HepG2 (cell line): ENCODE measurements at regions of chr18 and their contacts with region 1.

Region 1: GRCh38 chr18:41906528-41907146 is 48.4 kb upstream of the PIK3C3 start:
- DNase-seq: peak; percentile 13
- ATAC-seq: peak; percentile 38; the same call in 1 of the 3 replicates
- H3K4me3 ChIP-seq: no peak overlapping the region
- H3K27ac ChIP-seq: no peak overlapping the region
- H3K4me1 ChIP-seq: no peaks in the 10 kb centered on the region
- H3K27me3 ChIP-seq: no peaks in the 10 kb centered on the region
- CTCF ChIP-seq: peak; percentile 64
- EP300 ChIP-seq: no peak
- POLR2A ChIP-seq: no peak
- RAD21 ChIP-seq: no peak; the same call in 1 of the 2 replicates

Region 2: DNA sequence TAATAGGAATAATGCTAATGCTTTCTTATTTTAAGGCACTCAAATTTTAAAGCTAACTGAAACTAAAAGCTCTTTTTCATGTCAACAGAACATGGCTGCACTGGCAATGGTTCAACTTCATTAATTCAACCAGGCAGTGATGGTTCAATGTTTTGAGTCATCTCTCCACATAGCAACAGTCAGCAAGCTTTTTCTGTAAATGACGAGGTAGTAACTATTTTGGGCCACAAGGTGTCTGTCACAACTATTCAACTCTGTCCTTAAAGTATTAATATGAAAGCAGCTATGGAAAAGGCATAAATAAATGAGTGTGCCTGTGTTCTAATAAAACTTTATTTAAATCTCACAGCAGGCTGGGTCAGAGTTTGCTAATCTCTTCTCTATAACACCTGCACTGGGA is 1377.2 kb before region 1 on chr18:
- CTCF ChIA-PET with region 1: no interaction called
- POLR2A ChIA-PET with region 1: no interaction called
- in situ Hi-C with region 1: no loop called
- intact Hi-C with region 1: loop called (anchors 10 kb)
- DNase-seq: peak; percentile 1
- ATAC-seq: peak; percentile 46; the same call in 1 of the 3 replicates
- H3K4me3 ChIP-seq: no peak overlapping the region
- H3K27ac ChIP-seq: no peak overlapping the region
- H3K4me1 ChIP-seq: no peaks in the 10 kb centered on the region
- H3K27me3 ChIP-seq: no peaks in the 10 kb centered on the region
- CTCF ChIP-seq: no peak
- EP300 ChIP-seq: no peak
- POLR2A ChIP-seq: no peak
- RAD21 ChIP-seq: no peak

Region 3: GRCh38 chr18:40935423-40935822 is 971.2 kb before region 1 on chr18:
- CTCF ChIA-PET with region 1: interaction called, 3 read pairs
- POLR2A ChIA-PET with region 1: no interaction called
- in situ Hi-C with region 1: loop called (anchors 25 kb)
- intact Hi-C with region 1: no loop called
- DNase-seq: peak; percentile 35
- ATAC-seq: no peak
- H3K4me3 ChIP-seq: no peak overlapping the region
- H3K27ac ChIP-seq: no peak overlapping the region
- H3K4me1 ChIP-seq: no peaks in the 10 kb centered on the region
- H3K27me3 ChIP-seq: no peaks in the 10 kb centered on the region; a peak in 1 of 5 replicates
- CTCF ChIP-seq: peak; percentile 29; the same call in 1 of the 2 replicates
- EP300 ChIP-seq: no peak
- POLR2A ChIP-seq: no peak
- RAD21 ChIP-seq: no peak

Region 4: DNA sequence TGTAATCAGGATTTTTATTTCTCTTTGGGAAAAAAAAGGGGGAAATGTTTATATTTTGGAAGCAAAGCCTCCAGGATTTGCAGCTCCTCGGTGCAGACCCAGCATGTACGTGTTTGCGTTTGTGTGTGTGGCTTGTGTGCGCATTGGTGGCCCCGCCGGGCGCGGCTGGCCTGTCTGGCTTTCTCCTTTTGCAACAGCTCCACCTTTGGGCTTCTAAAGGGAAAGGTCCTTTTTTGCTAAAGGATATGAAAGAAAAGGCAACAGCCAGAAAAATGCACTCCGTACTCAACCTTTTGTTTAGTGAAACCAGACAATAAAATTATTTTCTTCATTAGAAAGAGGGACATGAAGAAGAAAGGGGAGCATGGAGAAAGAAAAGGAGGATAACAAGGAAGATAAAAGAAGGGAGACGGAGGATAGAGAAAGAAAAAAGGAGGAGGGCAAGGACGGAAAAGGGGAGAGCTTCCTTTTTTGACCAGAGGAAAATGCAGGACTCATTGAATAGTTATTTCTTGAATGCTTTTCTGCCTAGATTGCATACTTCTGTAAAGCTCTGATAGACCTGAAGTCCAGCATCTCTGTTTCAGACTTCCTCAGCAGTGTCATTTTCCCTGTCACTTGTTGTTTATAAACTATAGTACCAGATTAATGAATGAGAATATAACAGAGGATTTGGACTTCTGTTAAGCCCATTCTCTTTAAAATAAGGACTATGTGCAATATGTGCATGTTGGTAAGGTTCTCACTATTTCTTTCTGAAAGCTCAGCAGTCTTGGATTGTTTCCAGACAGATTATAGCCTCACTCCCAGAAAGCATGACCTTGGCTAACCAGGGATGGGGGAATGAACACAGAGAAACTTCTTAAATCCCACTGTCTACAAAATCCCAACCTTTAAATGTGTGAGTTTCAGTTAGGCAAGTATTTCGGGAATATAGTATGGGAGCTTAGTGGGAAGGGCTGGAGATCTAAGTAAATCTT is 514.7 kb before region 1 on chr18:
- CTCF ChIA-PET with region 1: no interaction called
- POLR2A ChIA-PET with region 1: no interaction called
- in situ Hi-C with region 1: no loop called
- intact Hi-C with region 1: loop called (anchors 10 kb)
- DNase-seq: peak; percentile 47
- ATAC-seq: peak; percentile 96
- H3K4me3 ChIP-seq: no peak overlapping the region
- H3K27ac ChIP-seq: no peak overlapping the region
- H3K4me1 ChIP-seq: no peaks in the 10 kb centered on the region
- H3K27me3 ChIP-seq: no peaks in the 10 kb centered on the region; a peak in 1 of 5 replicates
- CTCF ChIP-seq: peak; percentile 80
- EP300 ChIP-seq: no peak
- POLR2A ChIP-seq: no peak
- RAD21 ChIP-seq: peak; percentile 48; the same call in 1 of the 2 replicates

Region 5: GRCh38 chr18:41745166-41746049 is 161.2 kb before region 1 on chr18:
- CTCF ChIA-PET with region 1: no interaction called
- POLR2A ChIA-PET with region 1: no interaction called
- in situ Hi-C with region 1: no loop called
- intact Hi-C with region 1: loop called (anchors 10 kb)
- DNase-seq: peak; percentile 21
- ATAC-seq: peak; percentile 99
- H3K4me3 ChIP-seq: no peak overlapping the region
- H3K27ac ChIP-seq: no peak overlapping the region
- H3K4me1 ChIP-seq: no peaks in the 10 kb centered on the region
- H3K27me3 ChIP-seq: no peaks in the 10 kb centered on the region; a peak in 1 of 5 replicates
- CTCF ChIP-seq: peak; percentile 76
- EP300 ChIP-seq: no peak
- POLR2A ChIP-seq: no peak
- RAD21 ChIP-seq: peak; percentile 35; the same call in 1 of the 2 replicates

Region 6: GRCh38 chr18:41767960-41768359 is 138.7 kb before region 1 on chr18:
- CTCF ChIA-PET with region 1: no interaction called
- POLR2A ChIA-PET with region 1: no interaction called
- in situ Hi-C with region 1: loop called (anchors 10 kb)
- intact Hi-C with region 1: no loop called
- DNase-seq: no peak
- ATAC-seq: no peak; the same call in 2 of the 3 replicates
- H3K4me3 ChIP-seq: no peak overlapping the region
- H3K27ac ChIP-seq: no peak overlapping the region
- H3K4me1 ChIP-seq: no peaks in the 10 kb centered on the region
- H3K27me3 ChIP-seq: no peaks in the 10 kb centered on the region
- CTCF ChIP-seq: no peak
- EP300 ChIP-seq: no peak
- POLR2A ChIP-seq: no peak
- RAD21 ChIP-seq: no peak

Region 7: DNA sequence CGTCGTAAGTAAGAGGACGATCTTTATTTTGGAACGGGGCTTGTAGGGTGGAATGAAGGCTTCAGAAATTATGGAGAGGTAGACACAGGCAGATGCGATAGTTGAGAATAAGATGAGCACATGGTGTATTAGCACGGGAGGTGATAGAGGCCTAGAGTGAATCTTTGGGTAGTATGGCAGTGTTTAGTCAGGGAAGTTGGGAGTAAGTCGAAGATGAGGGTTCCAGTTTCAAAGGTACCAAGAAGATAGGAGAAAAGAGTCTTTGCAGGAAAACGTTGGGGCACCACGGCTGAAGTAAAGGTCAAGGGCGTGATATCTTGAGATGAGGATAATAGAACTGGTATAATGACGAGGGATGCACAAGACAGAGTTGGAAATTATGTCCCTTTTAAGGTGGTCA is 49.1 kb after region 1 on chr18:
- CTCF ChIA-PET with region 1: no interaction called
- POLR2A ChIA-PET with region 1: no interaction called
- in situ Hi-C with region 1: no loop called
- intact Hi-C with region 1: no loop called
- DNase-seq: no peak
- ATAC-seq: peak; percentile 54
- H3K4me3 ChIP-seq: peak overlapping the region; percentile 77 to 100 (median 93)
- H3K27ac ChIP-seq: peak overlapping the region; percentile 73
- H3K4me1 ChIP-seq: peaks cover 18% of the 10 kb centered on the region
- H3K27me3 ChIP-seq: peaks cover 0 to 8% of the 10 kb centered on the region in 2 experiments; a peak in 2 of 5 replicates
- CTCF ChIP-seq: no peak
- EP300 ChIP-seq: no peak
- POLR2A ChIP-seq: no peak
- RAD21 ChIP-seq: no peak

Region 8: GRCh38 chr18:41965634-41966255 is 59.1 kb after region 1 on chr18:
- CTCF ChIA-PET with region 1: no interaction called
- POLR2A ChIA-PET with region 1: no interaction called
- in situ Hi-C with region 1: no loop called
- intact Hi-C with region 1: no loop called
- DNase-seq: no peak
- ATAC-seq: no peak
- H3K4me3 ChIP-seq: no peak overlapping the region
- H3K27ac ChIP-seq: no peak overlapping the region
- H3K4me1 ChIP-seq: no peaks in the 10 kb centered on the region
- H3K27me3 ChIP-seq: no peaks in the 10 kb centered on the region
- CTCF ChIP-seq: no peak
- EP300 ChIP-seq: no peak
- POLR2A ChIP-seq: no peak
- RAD21 ChIP-seq: no peak